HepG2 (cell line): ENCODE measurements at regions of chr2 and their contacts with region 1.

Region 1: DNA sequence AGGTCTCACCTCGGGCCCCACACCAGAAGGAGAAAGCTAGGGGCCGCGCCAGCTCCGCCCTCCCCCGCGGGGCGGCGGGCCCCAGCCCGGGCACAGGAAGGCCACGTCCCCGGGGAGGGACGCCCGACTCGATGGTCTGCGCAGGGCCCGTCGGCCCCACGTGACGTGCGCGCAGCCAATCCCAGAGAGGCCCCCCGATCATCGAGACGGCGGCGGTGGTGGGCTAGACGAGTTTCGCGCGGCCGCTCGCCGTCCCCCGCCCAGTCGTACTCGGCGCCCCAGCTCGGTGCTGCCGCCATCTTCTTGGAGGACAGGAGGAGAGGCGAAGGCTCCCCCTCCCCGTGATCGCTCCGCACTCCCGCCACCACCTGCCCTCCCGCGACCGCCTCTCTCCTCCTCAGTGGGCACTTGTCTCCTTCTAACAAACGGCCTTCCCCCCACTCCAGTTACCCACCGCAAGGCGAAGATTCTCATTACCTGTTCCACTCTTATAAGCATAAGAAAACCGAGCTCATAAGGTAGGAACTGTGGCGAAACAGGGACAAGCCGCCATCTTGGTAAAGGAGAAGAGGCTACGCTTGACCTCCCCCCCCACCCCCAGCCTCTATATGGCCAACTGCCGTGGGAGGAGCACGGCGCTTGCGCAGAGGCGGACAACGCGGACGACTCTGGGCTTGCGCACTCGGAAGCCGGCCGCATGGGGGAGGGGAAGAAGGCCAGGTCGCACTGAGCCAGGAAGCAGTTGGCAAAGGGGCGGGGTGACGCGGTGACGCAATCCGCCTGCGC is at the start of gene HDLBP:
- DNase-seq: peak; percentile 98
- ATAC-seq: peak; percentile 90
- H3K4me3 ChIP-seq: peak within 1 kb of the TSS; percentile 92 to 96 (median 96)
- H3K27ac ChIP-seq: peak within 1 kb of the TSS; percentile 97
- H3K4me1 ChIP-seq: peaks cover 75% of the 10 kb centered on the region
- H3K27me3 ChIP-seq: no peaks in the 10 kb centered on the region; a peak in 1 of 5 replicates
- CTCF ChIP-seq: peak; percentile 96
- EP300 ChIP-seq: peak in 1 of 2 experiments; percentile 36; a peak in 3 of 4 replicates
- POLR2A ChIP-seq: peak; percentile 65 to 84; a peak in 3 of 4 replicates
- RAD21 ChIP-seq: no peak; the same call in 1 of the 2 replicates
- total RNA-seq, gene HDLBP: 707 and 912 TPM in 2 replicates

Region 2: GRCh38 chr2:241244368-241244767 is 70.9 kb before region 1 on chr2:
- CTCF ChIA-PET with region 1: no interaction called
- POLR2A ChIA-PET with region 1: no interaction called
- in situ Hi-C with region 1: no loop called
- intact Hi-C with region 1: no loop called
- DNase-seq: no peak
- ATAC-seq: no peak
- H3K4me3 ChIP-seq: no peak overlapping the region
- H3K27ac ChIP-seq: no peak overlapping the region
- H3K4me1 ChIP-seq: no peaks in the 10 kb centered on the region
- H3K27me3 ChIP-seq: no peaks in the 10 kb centered on the region
- CTCF ChIP-seq: no peak
- EP300 ChIP-seq: no peak
- POLR2A ChIP-seq: no peak
- RAD21 ChIP-seq: no peak

Region 3: DNA sequence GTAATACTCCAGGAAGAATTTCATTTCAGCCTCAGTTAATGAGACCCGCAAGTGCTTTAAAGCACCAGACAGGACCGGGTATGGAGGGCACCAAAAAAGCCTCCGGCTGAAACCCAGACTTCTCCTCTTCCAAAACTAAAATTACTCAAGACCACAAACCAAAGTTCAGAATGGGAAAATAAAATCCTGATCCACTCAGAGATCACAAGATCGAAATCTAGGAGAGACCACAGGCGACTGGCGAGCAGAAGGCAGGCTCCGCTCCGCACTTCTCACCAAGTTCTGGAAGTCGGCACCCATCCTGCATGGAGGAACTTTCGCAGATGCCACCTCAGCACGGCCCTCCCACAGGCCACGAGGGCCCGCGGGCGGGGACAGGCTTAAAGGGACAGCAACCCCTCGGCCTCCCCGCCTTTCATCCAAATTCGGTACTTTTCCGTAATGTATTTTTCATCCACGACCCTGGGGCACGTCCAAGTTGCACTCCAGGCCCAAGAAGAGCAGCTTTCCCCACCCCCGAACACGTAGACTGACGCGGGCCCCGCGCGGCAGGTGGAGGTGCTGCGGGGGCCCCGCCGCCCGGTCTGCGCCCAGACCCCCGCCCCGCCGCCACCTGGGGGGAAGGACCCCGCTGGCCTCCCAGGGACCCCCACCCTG is 43.5 kb before region 1 on chr2:
- CTCF ChIA-PET with region 1: no interaction called
- POLR2A ChIA-PET with region 1: interaction called, 8 read pairs
- in situ Hi-C with region 1: loop called (anchors 5 kb)
- intact Hi-C with region 1: loop called (anchors 2 kb)
- DNase-seq: peak; percentile 76
- ATAC-seq: peak; percentile 66
- H3K4me3 ChIP-seq: peak overlapping the region; percentile 75 to 91 (median 80)
- H3K27ac ChIP-seq: peak overlapping the region; percentile 85
- H3K4me1 ChIP-seq: peaks cover 76% of the 10 kb centered on the region
- H3K27me3 ChIP-seq: no peaks in the 10 kb centered on the region; a peak in 1 of 5 replicates
- CTCF ChIP-seq: no peak
- EP300 ChIP-seq: no peak; a peak in 1 of 4 replicates
- POLR2A ChIP-seq: peak; percentile 66 to 85
- RAD21 ChIP-seq: no peak

Region 4: DNA sequence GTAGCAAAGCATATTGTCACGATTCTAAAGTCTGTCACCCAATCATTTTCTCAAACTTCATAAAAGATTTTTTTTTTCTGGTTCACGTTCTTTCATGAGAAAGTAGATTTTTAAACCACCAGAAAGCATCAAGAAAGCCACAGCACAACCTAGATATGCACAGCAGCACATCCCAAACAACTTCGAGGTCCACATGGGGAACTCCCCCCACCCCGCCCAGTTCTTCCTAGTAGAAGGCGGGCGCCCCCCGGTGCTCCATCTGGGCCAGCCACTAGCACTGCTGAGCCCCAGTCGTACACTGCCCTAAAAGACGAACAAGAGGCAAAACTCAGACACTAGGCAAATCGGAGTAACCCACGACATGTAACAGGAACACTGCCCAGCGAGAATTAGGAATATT is 15.3 kb before region 1 on chr2:
- CTCF ChIA-PET with region 1: no interaction called
- POLR2A ChIA-PET with region 1: interaction called, 34 read pairs
- in situ Hi-C with region 1: no loop called
- intact Hi-C with region 1: no loop called
- DNase-seq: no peak
- ATAC-seq: peak; percentile 25; the same call in 2 of the 3 replicates
- H3K4me3 ChIP-seq: no peak overlapping the region
- H3K27ac ChIP-seq: no peak overlapping the region
- H3K4me1 ChIP-seq: peaks cover 53% of the 10 kb centered on the region
- H3K27me3 ChIP-seq: no peaks in the 10 kb centered on the region
- CTCF ChIP-seq: peak; percentile 47
- EP300 ChIP-seq: no peak
- POLR2A ChIP-seq: no peak
- RAD21 ChIP-seq: no peak

Region 5: DNA sequence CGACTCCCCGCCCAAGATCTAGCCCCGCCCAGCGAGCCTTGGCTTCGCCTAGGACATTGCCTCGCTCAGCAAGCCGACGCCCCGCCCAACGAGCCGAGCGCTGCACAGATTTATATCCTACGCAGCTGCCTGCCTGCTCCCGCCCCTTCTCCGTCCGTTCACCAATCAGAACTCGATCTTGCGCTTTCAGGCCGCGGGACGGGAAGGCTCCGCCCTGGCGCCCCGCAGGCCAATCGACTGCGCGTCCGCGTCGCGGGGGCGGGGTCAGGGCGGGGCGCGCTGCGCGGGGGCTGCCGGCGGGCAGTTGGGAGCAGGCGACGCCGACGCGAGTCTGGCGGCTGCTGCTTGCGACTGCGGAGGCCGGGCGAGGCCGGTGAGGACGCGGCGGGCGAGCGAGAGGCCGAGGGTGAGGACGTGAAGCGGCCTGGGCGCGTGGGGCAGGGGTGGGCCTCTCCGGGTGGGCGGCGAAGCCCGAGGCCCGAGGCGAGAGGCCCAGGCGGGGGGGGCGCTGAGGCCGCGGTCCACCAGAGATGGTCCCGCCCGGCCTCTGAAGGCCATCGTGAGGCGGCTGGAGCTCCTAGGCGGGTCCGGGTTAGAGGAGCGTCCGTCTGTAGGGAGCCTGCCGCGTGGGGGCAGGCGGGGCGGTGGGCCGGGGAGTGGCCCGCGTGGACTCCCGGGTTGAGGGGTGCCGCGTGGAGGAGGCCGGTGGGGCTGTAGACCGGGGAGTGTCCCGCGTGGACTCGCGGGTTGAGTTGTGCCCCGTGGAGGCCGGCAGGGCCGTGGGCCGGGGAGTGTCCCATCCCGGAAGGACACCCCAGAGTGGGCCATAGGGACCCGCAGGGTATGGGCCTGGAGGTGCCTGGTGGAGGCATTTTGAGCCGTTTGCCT is 40.9 kb after region 1 on chr2 and contains the start of gene FARP2:
- CTCF ChIA-PET with region 1: no interaction called
- POLR2A ChIA-PET with region 1: interaction called, 55 read pairs
- in situ Hi-C with region 1: loop called (anchors 5 kb)
- intact Hi-C with region 1: loop called (anchors 2 kb)
- DNase-seq: peak; percentile 98
- ATAC-seq: peak; percentile 72
- H3K4me3 ChIP-seq: peak within 1 kb of the TSS; percentile 83 to 96 (median 94)
- H3K27ac ChIP-seq: peak within 1 kb of the TSS; percentile 80
- H3K4me1 ChIP-seq: peaks cover 84% of the 10 kb centered on the region
- H3K27me3 ChIP-seq: no peaks in the 10 kb centered on the region; a peak in 1 of 5 replicates
- CTCF ChIP-seq: 0 out of 2 replicates have a peak, but pooled peaks have one; percentile 1
- EP300 ChIP-seq: no peak
- POLR2A ChIP-seq: peak; percentile 85 to 95
- RAD21 ChIP-seq: peak; percentile 42
- total RNA-seq, gene FARP2: 43.3 and 45.4 TPM in 2 replicates

Region 6: DNA sequence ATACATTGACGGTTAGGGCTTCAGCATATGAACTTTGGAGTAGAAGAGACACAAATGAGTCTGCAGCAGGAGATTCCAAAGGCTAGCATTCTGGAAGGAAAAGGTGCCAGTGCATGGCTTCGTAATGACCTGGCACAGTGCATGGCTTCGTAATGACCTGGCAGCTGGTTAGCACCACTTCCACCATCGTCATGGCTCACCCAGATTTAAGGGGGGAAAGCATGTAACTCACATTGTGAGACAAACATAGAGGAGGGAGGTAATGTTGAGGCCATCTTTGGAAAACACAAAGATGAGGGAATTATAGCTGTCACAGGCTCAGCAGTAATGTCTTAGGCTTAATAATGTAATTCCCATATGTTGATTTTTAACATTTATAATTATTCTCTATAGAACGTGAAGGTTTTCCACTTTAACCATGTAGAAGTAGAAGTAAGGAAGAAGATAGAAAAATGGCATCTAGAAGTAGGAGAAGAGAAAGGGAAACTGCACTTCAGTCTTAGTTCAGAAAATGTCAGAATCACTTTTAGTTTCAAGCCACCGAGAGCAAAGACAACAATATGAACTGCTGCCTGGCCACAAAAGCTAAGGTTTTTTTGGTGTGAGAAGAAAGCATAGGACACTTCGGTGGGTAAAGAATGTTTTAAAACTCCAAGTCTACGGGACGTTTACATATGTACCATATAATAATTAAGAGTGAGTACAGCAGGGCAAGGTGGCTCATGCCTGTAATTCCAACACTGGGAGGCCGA is 199.9 kb after region 1 on chr2:
- CTCF ChIA-PET with region 1: no interaction called
- POLR2A ChIA-PET with region 1: no interaction called
- in situ Hi-C with region 1: no loop called
- intact Hi-C with region 1: no loop called
- DNase-seq: no peak
- ATAC-seq: peak; percentile 11; the same call in 2 of the 3 replicates
- H3K4me3 ChIP-seq: no peak overlapping the region
- H3K27ac ChIP-seq: peak overlapping the region; percentile 28
- H3K4me1 ChIP-seq: peaks cover 57% of the 10 kb centered on the region
- H3K27me3 ChIP-seq: no peaks in the 10 kb centered on the region; a peak in 2 of 5 replicates
- CTCF ChIP-seq: no peak
- EP300 ChIP-seq: no peak
- POLR2A ChIP-seq: no peak
- RAD21 ChIP-seq: no peak